Head of caudate nucleus (tissue), 42 donors: ENCODE measurements at regions of chr14 and their contacts with region 1.

Region 1: GRCh38 chr14:104137297-104138097 is 890 bp upstream of the KIF26A start:
- DNase-seq: peak; percentile 28 to 88 (median 70)

Region 2: DNA sequence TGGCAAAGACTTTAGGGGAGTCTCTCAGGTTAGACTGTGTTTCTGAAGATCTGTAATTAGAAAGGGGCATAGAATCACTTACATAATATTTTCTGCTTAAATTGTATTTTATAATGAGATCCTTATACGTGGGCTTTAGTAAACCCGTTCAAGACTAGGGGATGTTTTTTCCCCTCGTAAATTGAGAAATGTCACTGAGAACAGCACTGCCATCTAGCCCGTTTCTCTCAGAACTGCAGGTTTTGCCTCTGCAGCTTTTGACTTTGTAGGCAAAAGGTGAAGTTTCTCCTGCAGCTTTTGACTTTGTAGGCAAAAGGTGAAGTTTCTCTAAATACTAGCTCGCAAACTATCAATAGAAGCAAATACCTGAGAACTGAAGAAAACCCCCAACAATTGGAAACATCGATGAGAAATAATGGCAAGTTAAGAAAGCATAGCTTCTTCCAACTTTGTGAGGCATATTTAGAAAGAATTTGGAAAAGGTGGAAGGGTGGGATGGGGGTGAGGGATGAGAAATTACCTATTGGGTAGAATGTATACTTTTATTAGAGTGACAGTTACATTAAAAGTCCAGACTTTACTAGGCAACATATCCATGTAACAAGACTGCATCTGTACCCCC is 61.9 kb before region 1 on chr14:
- intact Hi-C with region 1: no loop called
- DNase-seq: peak in 5 of 42 donors; percentile 7 to 52 (median 38)

Region 3: GRCh38 chr14:104563742-104564615 is 426.5 kb after region 1 on chr14:
- intact Hi-C with region 1: loop called (anchors 2 kb)
- DNase-seq: peak; percentile 47 to 91 (median 76)

Region 4: DNA sequence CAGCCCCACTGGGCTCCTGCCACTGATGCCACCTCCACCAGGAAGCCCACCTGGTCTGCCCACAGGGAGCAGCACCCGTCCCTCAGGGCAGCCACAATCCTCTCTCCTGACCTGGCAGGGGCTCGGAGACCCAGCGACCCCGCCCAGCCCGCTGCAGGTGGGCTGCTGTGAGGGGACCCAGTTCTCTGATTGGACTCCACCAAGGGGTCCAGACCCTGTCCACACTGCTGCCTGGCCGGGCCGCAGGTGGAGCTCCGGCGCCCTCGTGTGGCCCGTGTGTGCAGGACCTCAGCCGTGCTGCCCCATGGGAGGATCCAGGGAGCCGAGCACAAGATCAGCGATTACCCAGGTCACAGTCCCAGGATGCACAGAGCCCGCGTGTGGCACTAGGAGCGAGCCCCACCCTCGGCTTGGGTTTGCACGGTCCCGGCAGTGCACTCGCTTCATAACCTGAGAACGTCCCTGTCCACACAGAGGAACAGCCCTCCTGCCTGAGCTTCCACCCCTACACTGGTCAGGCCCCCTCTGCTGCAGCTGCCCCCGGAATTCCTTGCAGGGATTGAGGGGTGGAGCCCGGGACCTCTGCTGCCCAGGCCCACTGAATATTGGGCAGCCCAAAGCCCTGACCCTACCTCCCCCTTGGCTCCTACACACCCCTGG is 502.5 kb after region 1 on chr14:
- intact Hi-C with region 1: loop called (anchors 5 kb)
- DNase-seq: peak; percentile 57 to 90 (median 78)